ENCODE measurements at regions of chr1 and their contacts with region 1.

Region 1: GRCh38 chr1:24142546-24143534 is at the start of gene IL22RA1:
- DNase-seq: peak; percentile 56
- H3K4me3 Mint-ChIP-seq: peak within 1 kb of the TSS; percentile 74
- H3K27ac Mint-ChIP-seq: peak within 1 kb of the TSS; percentile 76
- H3K4me1 Mint-ChIP-seq: peaks cover 7% of the 10 kb centered on the region
- H3K27me3 Mint-ChIP-seq: no peaks in the 10 kb centered on the region
- CTCF ChIP-seq: no peak
- total RNA-seq, gene IL22RA1: not detected in 2 replicates

Region 2: DNA sequence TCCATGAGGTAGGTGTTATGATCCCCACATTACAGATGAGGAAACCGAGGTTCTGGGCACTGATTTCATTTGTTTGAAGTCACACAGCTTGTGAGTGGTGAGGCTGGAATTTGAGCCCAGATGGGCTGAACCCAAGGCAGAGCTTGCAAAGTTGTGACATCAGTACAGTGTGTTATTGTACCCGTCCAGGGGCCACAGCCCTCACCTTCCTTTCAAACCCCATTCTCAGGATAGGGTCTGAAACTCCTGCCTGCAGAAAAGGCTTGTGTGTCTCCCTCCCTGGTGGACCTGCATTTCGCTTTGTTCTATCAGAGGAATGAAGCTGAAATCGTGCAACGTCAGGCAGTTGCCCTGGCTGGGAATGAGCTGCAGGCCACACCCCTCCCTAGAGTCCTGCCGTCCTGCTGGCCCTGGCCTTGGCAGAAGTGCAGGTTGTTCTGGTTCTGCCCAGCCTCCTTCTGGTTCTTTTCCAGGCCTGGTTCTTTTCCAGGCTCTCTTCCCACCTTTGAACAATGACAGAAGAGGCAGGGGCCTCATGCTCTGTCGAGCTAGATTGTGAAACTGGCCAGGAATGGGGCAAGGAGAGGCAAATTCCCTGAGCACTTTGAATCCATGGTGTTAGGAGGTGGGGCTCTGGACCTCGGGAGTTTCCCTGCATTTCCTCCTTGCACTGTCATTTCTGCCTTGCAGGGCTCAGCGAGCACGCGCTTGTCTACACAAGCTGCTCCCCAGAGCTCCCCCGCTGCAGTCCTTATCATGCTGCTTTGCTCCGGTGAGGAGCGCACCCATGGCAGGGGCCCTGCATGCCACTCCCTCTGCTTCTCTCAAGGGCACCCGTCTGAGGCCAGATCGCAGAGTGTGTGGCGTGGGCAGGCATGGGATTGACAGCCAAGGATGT is 22.7 kb before region 1 on chr1:
- CTCF ChIA-PET with region 1: interaction called, 4 read pairs
- POLR2A ChIA-PET with region 1: interaction called, 26 read pairs
- intact Hi-C with region 1: no loop called
- DNase-seq: peak; percentile 89
- H3K4me3 Mint-ChIP-seq: peak overlapping the region; percentile 56
- H3K27ac Mint-ChIP-seq: peak overlapping the region; percentile 82
- H3K4me1 Mint-ChIP-seq: peaks cover 27% of the 10 kb centered on the region
- H3K27me3 Mint-ChIP-seq: no peaks in the 10 kb centered on the region
- CTCF ChIP-seq: no peak

Measured in MCF 10A (cell line).